ENCODE measurements at regions of chr17 and their contacts with region 1.

Region 1: GRCh38 chr17:74379495-74380085 is 12.3 kb downstream of the GPR142 start:
- DNase-seq: peak; percentile 96
- ATAC-seq: peak; percentile 96

Region 2: DNA sequence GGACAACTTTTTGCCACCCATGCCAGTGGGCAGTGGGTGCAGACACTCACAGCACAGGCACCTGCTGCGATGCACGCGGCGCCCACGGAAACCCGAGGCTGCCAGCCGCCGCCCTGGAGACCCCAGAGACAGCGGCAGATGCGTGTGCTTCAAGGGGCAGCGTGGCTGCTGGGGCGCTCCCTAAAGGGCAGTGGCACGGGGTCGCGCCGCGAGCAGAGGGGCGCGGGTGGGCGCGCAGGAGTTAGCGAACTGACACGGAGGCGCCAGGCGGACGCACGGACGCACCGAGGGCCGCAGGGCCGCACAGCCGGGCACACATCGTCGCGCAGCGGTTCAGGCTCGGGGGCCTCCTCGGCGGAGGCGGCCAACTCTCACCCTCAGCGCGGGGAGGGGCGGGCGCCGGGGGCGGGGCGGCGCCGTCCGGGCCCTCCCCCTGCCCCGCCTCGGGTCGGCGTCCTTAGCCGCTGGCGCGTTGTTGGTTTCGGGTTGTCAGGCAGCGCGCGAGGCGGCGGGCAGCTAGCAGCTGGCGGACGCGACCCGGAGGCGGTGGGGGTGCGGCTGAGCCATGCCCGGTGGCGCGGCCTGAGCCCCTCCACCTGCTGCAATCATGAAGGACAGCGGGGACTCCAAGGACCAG is 53.7 kb before region 1 on chr17 and contains the start of gene KIF19:
- intact Hi-C with region 1: no loop called
- DNase-seq: peak; percentile 73
- ATAC-seq: peak; percentile 93
- total RNA-seq, gene KIF19: 0.30 TPM

Region 3: GRCh38 chr17:74394977-74395376 is 15.4 kb after region 1 on chr17:
- intact Hi-C with region 1: no loop called
- DNase-seq: no peak
- ATAC-seq: no peak

Region 4: GRCh38 chr17:74457820-74458166 is 78.2 kb after region 1 on chr17:
- intact Hi-C with region 1: loop called (anchors 1 kb)
- DNase-seq: no peak
- ATAC-seq: no peak

Region 5: GRCh38 chr17:74592087-74592990 is 212.7 kb after region 1 on chr17 and contains the start of gene CD300LD:
- intact Hi-C with region 1: no loop called
- DNase-seq: no peak
- ATAC-seq: no peak
- total RNA-seq, gene CD300LD: not detected

Measured in left ventricle myocardium superior (tissue), 1 donor.